T-cell (primary cell): ENCODE measurements at regions of chr6 and their contacts with region 1.

Region 1: GRCh38 chr6:88982720-88983119 is 19.3 kb upstream of the RNGTT start:
- DNase-seq: peak in 3 of 35 experiments; percentile 8 to 78 (median 18)
- ATAC-seq: peak; percentile 72 to 89 (median 81)
- H3K4me3 ChIP-seq: no peak overlapping the region
- H3K4me3 Mint-ChIP-seq: no peak overlapping the region
- H3K27ac ChIP-seq: no peak overlapping the region
- H3K27ac Mint-ChIP-seq: no peak overlapping the region
- H3K4me1 ChIP-seq: no peaks in the 10 kb centered on the region
- H3K4me1 Mint-ChIP-seq: no peaks in the 10 kb centered on the region
- H3K27me3 ChIP-seq: no peaks in the 10 kb centered on the region
- H3K27me3 Mint-ChIP-seq: peaks cover 0 to 4% of the 10 kb centered on the region in 2 donors

Region 2: GRCh38 chr6:88992741-88993552 is 10.2 kb after region 1 on chr6:
- CTCF ChIA-PET with region 1: interaction called, 3 to 12 read pairs
- POLR2A ChIA-PET with region 1: interaction called in 1 of 2 experiments, 3 read pairs
- DNase-seq: no peak
- ATAC-seq: no peak
- H3K4me3 ChIP-seq: no peak overlapping the region
- H3K4me3 Mint-ChIP-seq: no peak overlapping the region
- H3K27ac ChIP-seq: no peak overlapping the region
- H3K27ac Mint-ChIP-seq: no peak overlapping the region
- H3K4me1 ChIP-seq: no peaks in the 10 kb centered on the region
- H3K4me1 Mint-ChIP-seq: no peaks in the 10 kb centered on the region
- H3K27me3 ChIP-seq: no peaks in the 10 kb centered on the region
- H3K27me3 Mint-ChIP-seq: no peaks in the 10 kb centered on the region

Region 3: GRCh38 chr6:89022798-89023197 is 40.1 kb after region 1 on chr6:
- CTCF ChIA-PET with region 1: no interaction called
- POLR2A ChIA-PET with region 1: no interaction called
- DNase-seq: no peak
- ATAC-seq: no peak
- H3K4me3 ChIP-seq: no peak overlapping the region
- H3K4me3 Mint-ChIP-seq: no peak overlapping the region
- H3K27ac ChIP-seq: no peak overlapping the region
- H3K27ac Mint-ChIP-seq: no peak overlapping the region
- H3K4me1 ChIP-seq: no peaks in the 10 kb centered on the region
- H3K4me1 Mint-ChIP-seq: no peaks in the 10 kb centered on the region
- H3K27me3 ChIP-seq: peaks cover 0 to 4% of the 10 kb centered on the region in 2 experiments
- H3K27me3 Mint-ChIP-seq: peaks cover 0 to 2% of the 10 kb centered on the region in 2 donors

Region 4: GRCh38 chr6:89145787-89146646 is 163.3 kb after region 1 on chr6 and contains the start of gene PM20D2:
- CTCF ChIA-PET with region 1: interaction called, 3 to 11 read pairs
- POLR2A ChIA-PET with region 1: no interaction called
- DNase-seq: peak in 34 of 35 experiments; percentile 22 to 71 (median 45)
- ATAC-seq: peak; percentile 78 to 84 (median 82)
- H3K4me3 ChIP-seq: peak within 1 kb of the TSS; percentile 59 to 81
- H3K4me3 Mint-ChIP-seq: peak within 1 kb of the TSS; percentile 87 to 97 (median 93)
- H3K27ac ChIP-seq: peak within 1 kb of the TSS; percentile 83
- H3K27ac Mint-ChIP-seq: peak within 1 kb of the TSS; percentile 90 to 91
- H3K4me1 ChIP-seq: peaks cover 5 to 9% of the 10 kb centered on the region in 2 experiments
- H3K4me1 Mint-ChIP-seq: peaks cover 25 to 34% (median 29%) of the 10 kb centered on the region in 3 donors
- H3K27me3 ChIP-seq: no peaks in the 10 kb centered on the region
- H3K27me3 Mint-ChIP-seq: no peaks in the 10 kb centered on the region
- total RNA-seq, gene PM20D2: 7.5 to 12.3 (median 10.1) TPM

Region 5: DNA sequence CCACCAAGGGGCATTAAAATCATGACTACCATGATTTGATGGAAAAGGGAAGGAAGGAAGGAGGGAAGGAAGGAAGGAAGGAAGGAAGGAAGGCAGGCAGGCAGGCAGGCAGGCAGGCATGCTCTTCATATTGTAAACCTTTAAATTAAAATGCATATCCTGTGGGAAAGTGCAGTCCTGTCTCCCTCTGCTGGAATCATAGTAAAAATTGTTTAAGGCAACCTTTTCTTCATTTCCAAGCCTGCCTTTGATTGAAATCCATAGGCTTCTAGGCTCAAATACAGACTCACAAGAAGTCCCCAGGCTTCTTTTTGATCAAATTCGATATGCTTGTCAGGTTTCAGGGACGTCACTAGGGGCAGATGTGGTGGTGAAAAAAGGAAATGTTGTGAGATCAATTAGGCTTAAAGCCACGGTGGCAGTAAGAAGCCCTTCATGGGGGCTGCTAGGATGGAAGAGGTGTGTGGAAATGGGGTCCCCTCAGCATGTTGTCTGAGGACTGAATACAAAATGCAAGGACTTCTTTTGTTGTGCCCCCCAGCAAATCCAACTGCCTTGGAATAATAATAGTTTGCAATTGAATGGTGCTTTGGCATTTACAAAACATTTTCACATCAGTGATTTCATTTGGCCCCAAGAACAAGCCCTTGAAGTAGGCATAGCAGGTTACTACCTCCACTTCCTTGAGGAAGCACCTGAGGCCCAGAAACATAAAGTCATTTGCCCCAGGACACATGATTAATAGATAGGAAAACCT is 260.0 kb after region 1 on chr6:
- CTCF ChIA-PET with region 1: interaction called, 7 to 20 read pairs
- POLR2A ChIA-PET with region 1: no interaction called
- DNase-seq: peak in 2 of 35 experiments; percentile 11 to 49
- ATAC-seq: peak in 2 of 4 experiments; percentile 33 to 54
- H3K4me3 ChIP-seq: no peak overlapping the region
- H3K4me3 Mint-ChIP-seq: no peak overlapping the region
- H3K27ac ChIP-seq: no peak overlapping the region
- H3K27ac Mint-ChIP-seq: no peak overlapping the region
- H3K4me1 ChIP-seq: peaks cover 0 to 10% of the 10 kb centered on the region in 2 experiments
- H3K4me1 Mint-ChIP-seq: peaks cover 16 to 24% (median 20%) of the 10 kb centered on the region in 3 donors
- H3K27me3 ChIP-seq: peaks cover 0 to under 1% of the 10 kb centered on the region in 2 experiments
- H3K27me3 Mint-ChIP-seq: peaks cover 0 to 15% of the 10 kb centered on the region in 2 donors

Region 6: GRCh38 chr6:89371849-89372505 is 389.3 kb after region 1 on chr6:
- CTCF ChIA-PET with region 1: interaction called, 5 to 12 read pairs
- POLR2A ChIA-PET with region 1: no interaction called
- DNase-seq: peak; percentile 54 to 86 (median 74)
- ATAC-seq: peak; percentile 68 to 88 (median 85)
- H3K4me3 ChIP-seq: no peak overlapping the region
- H3K4me3 Mint-ChIP-seq: no peak overlapping the region
- H3K27ac ChIP-seq: peak overlapping the region; percentile 17
- H3K27ac Mint-ChIP-seq: peak overlapping the region; percentile 55 to 74
- H3K4me1 ChIP-seq: peaks cover 10 to 18% of the 10 kb centered on the region in 2 experiments
- H3K4me1 Mint-ChIP-seq: peaks cover 20 to 25% (median 24%) of the 10 kb centered on the region in 3 donors
- H3K27me3 ChIP-seq: no peaks in the 10 kb centered on the region
- H3K27me3 Mint-ChIP-seq: no peaks in the 10 kb centered on the region